Sigmoid colon (tissue), 7 donors: ENCODE measurements at regions of chr2 and their contacts with region 1.

Region 1: GRCh38 chr2:66495788-66496640 is 61.1 kb downstream of the MEIS1 start:
- DNase-seq: peak; percentile 79
- H3K4me3 ChIP-seq: no peak overlapping the region
- H3K27ac ChIP-seq: peak overlapping the region; percentile 63 to 76 (median 66)
- H3K4me1 ChIP-seq: peaks cover 0 to 100% (median 85%) of the 10 kb centered on the region in 4 donors
- H3K27me3 ChIP-seq: no peaks in the 10 kb centered on the region
- CTCF ChIP-seq: peak in 2 of 4 experiments; percentile 6 to 30
- EP300 ChIP-seq: no peak
- POLR2A ChIP-seq: no peak

Region 2: GRCh38 chr2:66461664-66462500 is 34.1 kb before region 1 on chr2:
- intact Hi-C with region 1: loop called (anchors 5 kb)
- DNase-seq: no peak
- H3K4me3 ChIP-seq: no peak overlapping the region
- H3K27ac ChIP-seq: peak overlapping the region in 3 of 4 donors; percentile 15 to 99 (median 68)
- H3K4me1 ChIP-seq: peaks cover 0 to 100% (median 97%) of the 10 kb centered on the region in 4 donors
- H3K27me3 ChIP-seq: no peaks in the 10 kb centered on the region
- CTCF ChIP-seq: no peak
- EP300 ChIP-seq: no peak
- POLR2A ChIP-seq: no peak

Region 3: GRCh38 chr2:67037655-67038054 is 541.6 kb after region 1 on chr2:
- intact Hi-C with region 1: no loop called
- DNase-seq: no peak
- H3K4me3 ChIP-seq: no peak overlapping the region
- H3K27ac ChIP-seq: peak overlapping the region in 1 of 4 donors; percentile 22
- H3K4me1 ChIP-seq: peaks cover 0 to 27% (median 2%) of the 10 kb centered on the region in 4 donors
- H3K27me3 ChIP-seq: no peaks in the 10 kb centered on the region
- CTCF ChIP-seq: no peak
- EP300 ChIP-seq: no peak
- POLR2A ChIP-seq: no peak